Activated CD4-positive, alpha-beta memory T cell treated with anti-CD3 and anti-CD28 coated beads for 36 hours (primary cell): ENCODE measurements at regions of chr12 and their contacts with region 1.

Region 1: GRCh38 chr12:11981121-11981733 is 89.5 kb upstream of the BCL2L14 start:
- DNase-seq: peak; percentile 78
- H3K4me3 Mint-ChIP-seq: peak overlapping the region; percentile 36
- H3K27ac Mint-ChIP-seq: peak overlapping the region; percentile 99
- H3K4me1 Mint-ChIP-seq: peaks cover 68% of the 10 kb centered on the region
- H3K27me3 Mint-ChIP-seq: no peaks in the 10 kb centered on the region

Region 2: DNA sequence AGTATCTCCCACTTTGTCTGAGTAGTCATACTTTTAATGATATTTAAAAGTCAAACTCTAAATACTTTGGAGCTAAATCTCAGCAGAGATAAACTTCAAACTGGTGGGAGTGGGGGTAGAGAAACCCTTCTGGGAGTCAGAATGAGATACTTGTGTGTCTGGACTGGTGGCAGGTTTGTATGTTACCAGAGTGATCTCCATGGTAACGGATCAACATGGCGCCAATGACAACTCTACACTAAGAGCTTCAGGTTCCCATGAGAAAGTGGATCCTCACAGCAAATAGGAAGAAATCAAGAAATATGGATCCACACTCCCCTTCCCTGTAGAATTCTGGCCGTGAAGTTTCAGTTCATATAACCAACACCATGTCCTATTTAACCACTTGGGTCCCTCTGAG is 209.9 kb before region 1 on chr12:
- CTCF ChIA-PET with region 1: interaction called, 3 read pairs
- POLR2A ChIA-PET with region 1: interaction called, 6 read pairs
- intact Hi-C with region 1: loop called (anchors 1 kb)
- DNase-seq: peak; percentile 49
- H3K4me3 Mint-ChIP-seq: no peak overlapping the region
- H3K27ac Mint-ChIP-seq: peak overlapping the region; percentile 88
- H3K4me1 Mint-ChIP-seq: peaks cover 93% of the 10 kb centered on the region
- H3K27me3 Mint-ChIP-seq: no peaks in the 10 kb centered on the region

Region 3: DNA sequence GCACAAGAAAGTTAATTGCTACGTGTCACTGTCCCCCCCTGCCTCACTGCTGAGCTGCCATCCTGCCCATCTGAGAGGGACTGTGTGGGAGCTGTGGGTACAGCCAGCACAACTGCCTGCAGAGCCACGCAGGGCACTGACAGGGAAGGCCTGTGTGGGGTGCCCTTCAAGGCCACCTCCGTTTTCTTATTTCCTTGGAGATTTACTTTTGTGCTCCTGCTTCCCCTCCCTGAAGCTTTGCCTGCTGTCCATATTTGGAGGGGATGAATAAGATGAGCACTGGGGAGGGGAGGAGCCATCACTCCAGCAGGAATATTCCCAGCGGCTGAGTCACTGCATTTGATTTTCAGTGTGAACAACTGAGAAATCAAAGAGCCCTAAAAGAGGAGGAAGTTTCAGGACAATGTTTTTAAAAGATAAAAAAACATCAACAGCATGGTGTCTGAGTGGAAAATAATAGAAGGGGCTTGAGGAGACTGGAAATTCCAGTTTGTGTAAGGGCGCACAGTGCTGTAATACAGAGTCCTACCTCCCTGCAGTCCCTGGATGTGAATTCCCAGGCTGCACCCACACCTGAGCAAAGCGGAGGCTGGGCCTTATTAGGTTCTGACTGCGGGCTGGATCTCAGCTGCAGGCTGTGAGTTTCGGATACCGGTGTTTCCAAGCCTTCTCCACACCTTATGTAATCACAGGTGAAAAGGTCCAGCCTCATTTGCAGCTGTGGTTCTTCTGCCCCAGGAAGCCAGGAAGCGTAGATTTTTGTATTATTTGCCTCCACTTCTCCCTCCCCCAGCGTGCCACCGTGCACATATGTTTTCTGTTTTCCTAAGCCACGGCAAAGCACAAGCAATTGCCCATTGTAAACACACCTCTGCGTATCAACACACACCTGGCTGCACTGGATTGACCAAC is 103.1 kb before region 1 on chr12:
- CTCF ChIA-PET with region 1: no interaction called
- POLR2A ChIA-PET with region 1: no interaction called
- intact Hi-C with region 1: loop called (anchors 2 kb)
- DNase-seq: peak; percentile 37
- H3K4me3 Mint-ChIP-seq: no peak overlapping the region
- H3K27ac Mint-ChIP-seq: peak overlapping the region; percentile 55
- H3K4me1 Mint-ChIP-seq: peaks cover 51% of the 10 kb centered on the region
- H3K27me3 Mint-ChIP-seq: no peaks in the 10 kb centered on the region

Region 4: DNA sequence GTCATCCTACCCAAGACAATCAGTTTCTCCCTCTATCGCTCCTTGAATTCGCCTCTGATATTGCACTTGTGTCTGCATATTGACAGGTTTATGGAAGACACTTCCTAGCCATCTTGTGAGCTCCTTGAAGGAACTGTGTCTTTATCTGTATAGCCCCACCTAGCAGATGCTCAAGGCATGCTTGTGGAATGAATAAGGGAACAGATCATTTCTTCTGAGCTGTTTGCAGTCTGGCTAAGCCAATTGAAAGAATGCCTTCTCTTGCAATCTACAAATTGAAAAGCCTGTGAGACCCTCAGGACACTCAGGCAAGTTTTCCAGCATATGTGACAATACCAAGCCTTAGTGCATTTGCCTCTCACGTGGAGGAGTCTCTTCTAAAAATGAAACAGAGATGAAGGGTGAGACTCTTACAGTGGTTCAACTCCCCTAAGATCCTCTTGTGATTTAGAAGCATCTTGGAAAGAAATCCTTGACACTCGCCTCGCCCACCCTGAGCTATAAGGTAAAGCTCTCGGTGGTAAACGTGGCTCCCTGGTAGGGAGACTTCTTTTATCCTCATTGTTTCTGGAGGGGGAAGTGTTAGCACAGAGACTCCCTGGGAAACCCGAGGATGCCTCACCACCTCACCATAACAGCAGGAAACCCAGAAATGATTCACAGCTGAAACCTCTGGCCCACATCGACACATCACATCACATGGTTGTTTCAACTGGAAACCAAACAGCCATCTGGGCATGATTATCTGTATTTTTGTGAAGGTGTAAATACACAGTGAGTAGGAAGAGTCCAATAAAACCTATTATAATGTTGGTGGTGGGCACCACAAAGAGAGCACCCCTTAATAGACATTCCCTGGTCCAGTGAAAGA is 22.8 kb before region 1 on chr12:
- CTCF ChIA-PET with region 1: interaction called, 4 read pairs
- POLR2A ChIA-PET with region 1: interaction called, 12 read pairs
- intact Hi-C with region 1: loop called (anchors 1 kb)
- DNase-seq: peak; percentile 80
- H3K4me3 Mint-ChIP-seq: peak overlapping the region; percentile 50
- H3K27ac Mint-ChIP-seq: peak overlapping the region; percentile 90
- H3K4me1 Mint-ChIP-seq: peaks cover 37% of the 10 kb centered on the region
- H3K27me3 Mint-ChIP-seq: no peaks in the 10 kb centered on the region

Region 5: GRCh38 chr12:12024911-12025682 is 43.9 kb after region 1 on chr12:
- CTCF ChIA-PET with region 1: no interaction called
- POLR2A ChIA-PET with region 1: no interaction called
- intact Hi-C with region 1: loop called (anchors 1 kb)
- DNase-seq: peak; percentile 82
- H3K4me3 Mint-ChIP-seq: peak overlapping the region; percentile 2
- H3K27ac Mint-ChIP-seq: peak overlapping the region; percentile 86
- H3K4me1 Mint-ChIP-seq: peaks cover 85% of the 10 kb centered on the region
- H3K27me3 Mint-ChIP-seq: no peaks in the 10 kb centered on the region